Naive thymus-derived CD4-positive, alpha-beta T cell (primary cell): ENCODE measurements at regions of chr3 and their contacts with region 1.

Region 1: GRCh38 chr3:43215663-43216275 is 70.6 kb upstream of the SNRK start:
- DNase-seq: peak in 2 of 9 donors; percentile 24 to 31
- ATAC-seq: no peak
- H3K4me3 ChIP-seq: no peak overlapping the region
- H3K4me3 Mint-ChIP-seq: peak overlapping the region in 7 of 10 donors; percentile 34 to 71 (median 59)
- H3K27ac ChIP-seq: no peak overlapping the region
- H3K27ac Mint-ChIP-seq: peak overlapping the region in 8 of 9 donors; percentile 63 to 91 (median 79)
- H3K4me1 ChIP-seq: peaks cover 0 to 43% of the 10 kb centered on the region in 2 donors
- H3K4me1 Mint-ChIP-seq: peaks cover 22 to 64% (median 58%) of the 10 kb centered on the region in 7 donors
- H3K27me3 ChIP-seq: no peaks in the 10 kb centered on the region
- H3K27me3 Mint-ChIP-seq: peaks cover 0 to 10% (median 0%) of the 10 kb centered on the region in 5 donors

Region 2: GRCh38 chr3:43198791-43199644 is 16.8 kb before region 1 on chr3:
- CTCF ChIA-PET with region 1: interaction called, 4 read pairs
- POLR2A ChIA-PET with region 1: interaction called, 10 read pairs
- intact Hi-C with region 1: loop called in 1 of 2 experiments (anchors 1 kb)
- DNase-seq: no peak
- ATAC-seq: no peak
- H3K4me3 ChIP-seq: no peak overlapping the region
- H3K4me3 Mint-ChIP-seq: peak overlapping the region in 5 of 10 donors; percentile 45 to 65 (median 51)
- H3K27ac ChIP-seq: no peak overlapping the region
- H3K27ac Mint-ChIP-seq: peak overlapping the region in 5 of 9 donors; percentile 3 to 98 (median 18)
- H3K4me1 ChIP-seq: peaks cover 16 to 54% of the 10 kb centered on the region in 2 donors
- H3K4me1 Mint-ChIP-seq: peaks cover 41 to 77% (median 71%) of the 10 kb centered on the region in 7 donors
- H3K27me3 ChIP-seq: no peaks in the 10 kb centered on the region
- H3K27me3 Mint-ChIP-seq: peaks cover 0 to 23% (median 0%) of the 10 kb centered on the region in 5 donors

Region 3: DNA sequence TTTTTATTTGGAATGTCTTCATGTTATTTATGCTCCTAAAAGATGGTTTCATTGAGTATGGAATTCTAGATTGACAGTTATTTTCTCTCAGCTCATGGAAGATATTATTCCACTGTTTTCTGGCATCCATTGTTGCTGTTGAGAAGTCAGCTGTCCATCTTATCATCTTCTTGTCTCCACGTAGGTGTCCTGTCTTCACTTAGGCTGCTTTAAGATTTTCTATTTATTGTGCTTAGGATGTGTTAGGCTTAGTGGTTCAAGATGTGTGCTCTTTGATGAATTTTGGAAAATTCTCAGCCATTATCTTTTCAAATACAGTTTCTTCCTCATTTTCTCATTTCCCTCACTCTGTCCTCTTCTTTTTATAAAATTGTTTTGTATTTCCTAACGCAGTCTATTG is 122.5 kb after region 1 on chr3:
- CTCF ChIA-PET with region 1: no interaction called
- POLR2A ChIA-PET with region 1: no interaction called
- intact Hi-C with region 1: no loop called
- DNase-seq: peak in 1 of 9 donors; percentile 17
- ATAC-seq: no peak
- H3K4me3 ChIP-seq: no peak overlapping the region
- H3K4me3 Mint-ChIP-seq: no peak overlapping the region
- H3K27ac ChIP-seq: no peak overlapping the region
- H3K27ac Mint-ChIP-seq: peak overlapping the region in 5 of 9 donors; percentile 8 to 85 (median 53)
- H3K4me1 ChIP-seq: peaks cover 10 to 19% of the 10 kb centered on the region in 2 donors
- H3K4me1 Mint-ChIP-seq: peaks cover 8 to 28% (median 18%) of the 10 kb centered on the region in 7 donors
- H3K27me3 ChIP-seq: no peaks in the 10 kb centered on the region
- H3K27me3 Mint-ChIP-seq: no peaks in the 10 kb centered on the region